ENCODE measurements at regions of chr19 and their contacts with region 1.

Region 1: DNA sequence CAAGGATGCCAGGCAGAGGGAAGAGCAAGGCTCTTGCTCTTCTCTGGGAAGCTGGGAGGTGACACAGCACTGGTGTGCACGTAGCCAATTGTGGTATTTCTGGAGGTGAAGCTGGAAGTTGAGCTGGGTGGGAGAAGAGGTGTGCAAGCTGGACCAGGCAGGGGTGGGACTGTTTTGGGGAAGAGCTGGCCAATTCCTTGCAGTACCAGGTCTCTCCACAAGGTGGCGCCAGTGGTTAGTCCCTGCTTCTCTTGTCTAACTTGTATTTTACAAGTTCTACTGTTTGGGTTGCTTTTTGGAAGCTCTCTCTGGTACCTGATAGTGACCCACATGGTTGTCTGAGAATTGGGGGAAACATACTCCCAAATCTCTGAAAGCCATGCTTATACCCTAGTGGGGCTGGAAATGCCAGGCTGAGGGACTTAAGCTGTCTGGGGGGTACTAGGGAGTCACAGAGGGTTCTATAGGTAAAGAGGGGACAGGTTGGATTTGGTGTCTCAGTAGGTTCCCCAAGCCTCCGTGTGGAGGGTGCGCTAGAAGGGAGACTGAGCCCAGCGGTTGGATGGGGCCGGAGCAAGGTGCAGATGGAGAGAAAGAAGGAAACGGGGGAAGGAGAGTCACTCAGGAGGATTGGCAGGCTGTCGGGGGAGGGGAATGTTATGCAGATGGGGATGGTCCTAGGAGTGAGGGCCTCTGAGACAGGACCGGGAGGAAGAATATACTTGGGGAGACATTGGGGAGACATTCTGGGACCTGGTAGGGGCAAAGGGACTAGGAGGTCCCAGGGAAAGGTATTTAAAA is 3.0 kb downstream of the HPN start:
- DNase-seq: peak; percentile 75
- CTCF ChIP-seq: peak; percentile 87

Region 2: DNA sequence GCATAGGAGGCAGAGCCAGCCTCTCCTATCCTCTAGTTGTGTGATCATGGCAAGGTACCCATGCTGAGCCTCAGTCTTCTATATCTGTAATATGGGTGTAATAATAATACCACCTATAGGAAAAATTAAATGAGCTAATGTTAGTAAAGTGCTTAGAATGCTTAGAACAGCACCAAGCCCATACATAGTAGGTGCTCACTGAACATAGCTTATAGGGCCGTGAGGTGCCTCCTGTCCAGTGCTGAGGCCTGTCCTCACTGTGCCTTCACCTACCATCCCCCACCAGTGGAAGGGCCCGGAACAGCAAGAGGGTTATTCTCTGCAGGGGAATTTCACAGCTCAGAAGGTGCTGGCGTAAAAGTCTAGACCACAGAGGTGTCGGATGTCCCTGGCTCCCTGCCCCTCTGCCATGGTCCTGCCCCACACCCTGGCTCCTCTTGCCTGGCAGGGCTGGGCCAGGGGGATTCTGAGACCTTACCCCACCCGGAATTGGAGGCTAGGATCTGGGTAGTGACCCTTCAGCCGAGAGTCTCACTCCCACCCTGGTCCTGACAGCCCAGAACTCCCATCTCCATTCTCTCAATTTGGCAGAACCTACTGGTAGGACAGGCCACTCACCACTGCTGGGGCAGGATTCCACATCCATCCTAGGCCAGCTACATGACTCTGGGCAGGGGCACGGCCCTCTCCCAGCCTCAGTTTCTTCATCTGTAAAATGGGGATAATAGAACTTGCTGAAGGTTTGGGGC is 16.5 kb before region 1 on chr19:
- CTCF ChIA-PET with region 1: interaction called, 14 read pairs
- POLR2A ChIA-PET with region 1: no interaction called
- DNase-seq: no peak
- CTCF ChIP-seq: no peak

Region 3: DNA sequence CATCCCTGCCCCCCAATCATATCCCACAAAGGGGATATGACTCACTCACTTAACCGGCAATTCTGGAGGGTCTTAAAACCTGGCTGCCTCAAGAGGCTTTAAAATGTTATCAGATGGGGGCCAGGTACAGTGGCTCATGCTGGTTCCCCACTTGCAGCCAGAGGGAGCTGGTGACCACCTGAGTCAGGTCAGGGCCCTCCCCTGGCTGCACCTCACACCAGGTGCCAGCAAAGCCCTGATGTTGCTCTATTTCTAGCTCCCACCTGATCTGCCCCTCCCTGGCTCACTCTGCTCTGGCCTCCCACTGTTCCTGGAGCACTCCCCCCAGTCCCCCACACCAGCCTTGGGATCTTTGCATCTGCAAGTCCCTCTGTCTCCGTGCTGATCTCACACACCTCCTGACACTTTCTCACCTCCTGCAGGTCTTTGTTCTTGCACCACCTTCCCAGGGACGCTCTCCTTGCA is 11.2 kb after region 1 on chr19:
- CTCF ChIA-PET with region 1: interaction called, 24 read pairs
- POLR2A ChIA-PET with region 1: no interaction called
- DNase-seq: no peak
- CTCF ChIP-seq: peak; percentile 48

Region 4: DNA sequence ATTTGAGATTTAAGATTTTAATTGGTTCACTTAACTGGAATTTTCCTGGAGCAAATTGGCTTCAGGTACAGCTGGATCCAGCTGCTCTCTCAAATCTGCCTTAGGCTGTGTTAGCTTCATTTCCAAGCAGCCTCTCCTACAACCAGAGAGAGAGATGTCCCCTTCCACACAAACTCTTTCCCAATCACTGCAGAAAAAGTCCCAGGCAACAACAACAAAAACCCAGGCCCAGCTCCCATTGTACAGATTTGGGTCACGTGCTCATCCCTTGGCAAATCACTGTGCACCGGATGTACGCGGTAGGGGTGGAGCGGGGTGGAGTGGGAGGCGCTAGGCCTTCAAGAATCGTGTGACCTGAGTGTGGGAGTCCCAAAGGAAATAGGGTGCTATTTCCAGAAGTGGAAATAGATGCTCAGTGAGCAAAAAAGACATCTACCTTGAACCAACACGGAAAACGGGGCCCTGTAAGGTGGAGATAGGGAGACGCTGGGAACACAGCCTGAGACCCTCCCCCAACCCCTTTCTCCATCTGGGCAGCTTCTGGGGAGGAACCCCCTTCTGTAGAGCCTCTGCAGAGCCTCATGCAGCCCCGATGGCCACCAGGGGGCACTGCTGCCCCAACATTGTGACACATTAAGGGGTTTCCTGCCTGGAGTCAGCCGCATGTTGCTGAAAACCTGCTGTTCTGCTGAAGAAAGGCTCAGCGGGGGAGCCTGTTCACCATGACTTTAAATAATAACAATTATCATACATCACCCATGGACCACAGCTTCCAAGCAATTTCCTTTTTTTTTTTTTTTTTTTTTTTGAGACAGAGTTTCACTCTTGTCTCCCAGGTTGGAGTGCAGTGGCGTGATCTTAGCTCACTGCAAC is 22.4 kb after region 1 on chr19:
- CTCF ChIA-PET with region 1: interaction called, 31 read pairs
- POLR2A ChIA-PET with region 1: no interaction called
- DNase-seq: peak; percentile 93
- CTCF ChIP-seq: peak; percentile 93

Region 5: DNA sequence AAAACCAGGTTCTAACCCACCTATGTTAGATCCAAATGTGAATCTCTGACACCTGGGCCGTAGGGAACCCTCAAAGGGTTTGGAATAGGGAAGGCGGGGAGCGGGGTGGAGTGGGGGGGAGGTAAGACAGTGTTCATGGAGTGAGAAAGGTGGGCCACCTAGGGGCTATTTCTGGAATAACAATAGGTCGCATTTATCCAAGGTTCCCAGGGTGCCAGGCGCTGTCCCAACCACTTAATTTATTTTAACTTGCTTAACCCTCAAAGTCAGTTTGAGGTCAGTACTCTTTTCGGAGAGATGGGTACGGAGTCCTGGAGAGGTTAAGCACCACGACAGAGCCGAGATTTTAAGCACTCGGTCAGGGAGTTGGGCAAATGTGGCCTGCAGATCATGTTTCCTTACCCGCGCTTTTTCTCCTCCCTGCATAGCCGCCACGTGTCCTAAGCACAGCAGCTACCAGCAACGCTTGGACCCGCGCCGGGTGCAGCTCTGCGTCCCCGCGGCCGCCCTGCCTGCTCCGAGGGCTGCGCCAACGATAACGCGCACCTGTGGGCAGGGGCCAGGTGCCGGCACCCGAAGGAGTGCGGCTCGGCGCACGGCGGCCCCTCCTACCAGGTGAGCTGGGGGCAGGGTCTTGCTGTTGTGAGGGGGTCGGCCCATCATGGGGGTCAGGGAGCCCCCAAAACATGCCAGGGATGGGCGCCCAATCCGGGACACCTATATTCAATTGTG is 46.2 kb after region 1 on chr19:
- CTCF ChIA-PET with region 1: interaction called, 14 read pairs
- POLR2A ChIA-PET with region 1: no interaction called
- DNase-seq: peak; percentile 76
- CTCF ChIP-seq: peak; percentile 49

Region 6: GRCh38 chr19:35140962-35141637 is 96.6 kb after region 1 on chr19:
- CTCF ChIA-PET with region 1: interaction called, 18 read pairs
- POLR2A ChIA-PET with region 1: no interaction called
- DNase-seq: peak; percentile 100
- CTCF ChIP-seq: peak; percentile 60

Measured in GM10248 (cell line).